Dendritic cell treated with granulocyte-macrophage colony-stimulating factor and Interleukin-4, amounts not matched to agents 40 ng/mL and 50 ng/mL, for 4 days (primary cell): ENCODE measurements at regions of chr3 and their contacts with region 1.

Region 1: DNA sequence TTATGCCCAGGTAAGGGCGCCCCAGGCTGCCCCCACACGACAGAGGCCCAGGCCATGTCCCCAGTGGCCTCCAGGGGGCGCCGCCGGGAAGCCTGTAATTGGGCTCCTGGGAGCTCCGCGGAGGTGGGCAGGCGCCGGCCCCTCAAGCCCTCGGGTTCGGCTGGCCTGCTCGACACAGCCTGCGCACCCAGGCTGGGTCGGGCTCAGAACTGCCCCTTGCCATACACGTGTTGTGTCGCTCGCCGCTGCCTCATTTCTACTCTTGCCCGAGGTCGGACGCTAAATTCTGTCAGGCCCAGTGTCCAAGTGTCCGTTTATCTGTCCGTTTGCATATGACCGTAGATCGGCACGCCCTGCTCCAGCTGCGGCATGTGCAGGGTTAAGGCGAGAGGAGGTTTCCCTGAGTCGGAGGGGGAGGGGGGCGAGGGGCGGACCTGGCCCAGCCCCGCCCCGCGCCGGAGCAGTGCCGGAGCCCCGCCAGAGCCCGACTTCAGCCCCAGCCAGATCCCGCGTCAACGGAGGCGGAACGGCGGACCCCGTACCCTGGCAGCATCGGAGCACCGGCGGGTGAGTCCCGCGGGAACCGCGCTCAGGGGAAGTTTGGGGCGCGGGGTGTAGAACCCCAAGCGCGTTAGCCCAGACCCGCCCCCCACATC is at the start of gene KLHDC8B:
- H3K4me3 Mint-ChIP-seq: peak within 1 kb of the TSS; percentile 83
- H3K27ac Mint-ChIP-seq: peak within 1 kb of the TSS; percentile 80
- H3K4me1 Mint-ChIP-seq: peaks cover 29% of the 10 kb centered on the region
- H3K27me3 Mint-ChIP-seq: peaks cover 9% of the 10 kb centered on the region

Region 2: DNA sequence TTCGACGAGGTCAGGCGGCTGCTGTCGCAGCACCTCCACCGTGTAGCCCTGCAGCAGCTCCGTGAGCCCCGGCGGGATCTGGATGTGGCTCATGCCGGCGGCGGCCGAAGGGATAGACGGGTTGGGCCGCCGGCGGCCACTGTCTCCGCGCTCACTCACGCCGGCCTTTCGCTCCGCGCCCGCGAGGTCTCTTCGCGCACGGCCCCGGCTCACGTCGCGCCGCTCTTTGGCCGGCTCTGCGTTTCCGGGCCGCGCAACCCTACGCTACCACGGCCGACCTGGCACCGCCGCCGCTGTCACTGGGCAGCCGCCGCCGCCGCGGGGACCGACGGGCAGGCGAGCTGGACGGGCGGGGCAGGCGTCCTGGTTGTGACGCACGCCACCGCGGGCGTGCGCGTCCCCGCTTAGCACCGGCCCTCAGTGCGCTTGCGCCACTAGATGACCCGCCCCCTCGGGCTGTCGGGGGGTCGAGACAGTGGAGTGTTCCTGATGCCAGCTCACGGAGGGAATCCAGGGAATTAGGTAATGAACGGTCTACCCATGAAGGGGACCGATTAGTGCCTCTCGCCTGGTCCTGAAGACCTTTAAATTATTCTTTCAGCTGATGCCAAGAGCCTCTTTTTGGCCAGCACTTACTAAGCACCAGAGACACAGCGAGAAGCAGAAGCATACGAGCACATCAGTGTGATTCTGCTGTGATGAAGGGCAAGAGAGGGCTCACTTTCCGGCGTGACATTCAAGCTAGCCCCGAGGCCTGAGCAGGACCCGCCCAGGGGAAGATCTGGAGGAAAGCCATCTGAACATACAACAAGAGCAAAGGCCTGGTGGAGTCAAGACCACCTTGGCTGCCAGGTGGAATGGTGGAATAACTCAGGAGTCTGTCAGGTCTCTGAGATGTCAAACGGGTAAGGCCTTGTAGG is 323.5 kb before region 1 on chr3 and contains the start of gene PRKAR2A:
- intact Hi-C with region 1: no loop called
- H3K4me3 Mint-ChIP-seq: peak within 1 kb of the TSS; percentile 83
- H3K27ac Mint-ChIP-seq: peak within 1 kb of the TSS; percentile 96
- H3K4me1 Mint-ChIP-seq: peaks cover 34% of the 10 kb centered on the region
- H3K27me3 Mint-ChIP-seq: no peaks in the 10 kb centered on the region

Region 3: DNA sequence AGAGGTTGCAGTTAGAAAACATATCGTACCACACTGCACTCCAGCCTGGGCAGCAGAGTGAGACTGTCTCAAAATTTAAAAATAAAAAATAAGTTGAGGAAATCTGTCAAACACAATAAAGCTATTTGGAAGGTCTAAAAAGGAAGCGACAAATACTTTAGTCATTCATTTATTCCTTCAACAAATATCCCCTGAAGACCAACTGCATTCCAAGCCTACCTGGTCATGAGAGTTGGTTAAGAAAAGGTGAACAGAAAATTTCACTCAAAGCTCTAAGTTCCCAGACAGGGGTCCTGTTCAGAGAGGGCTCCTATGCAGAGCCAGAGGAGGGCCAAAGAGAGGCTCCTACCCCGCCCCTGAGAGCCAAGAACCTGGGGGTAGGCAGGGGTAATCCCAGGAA is 308.1 kb before region 1 on chr3:
- intact Hi-C with region 1: no loop called
- H3K4me3 Mint-ChIP-seq: no peak overlapping the region
- H3K27ac Mint-ChIP-seq: no peak overlapping the region
- H3K4me1 Mint-ChIP-seq: peaks cover 13% of the 10 kb centered on the region
- H3K27me3 Mint-ChIP-seq: no peaks in the 10 kb centered on the region

Region 4: DNA sequence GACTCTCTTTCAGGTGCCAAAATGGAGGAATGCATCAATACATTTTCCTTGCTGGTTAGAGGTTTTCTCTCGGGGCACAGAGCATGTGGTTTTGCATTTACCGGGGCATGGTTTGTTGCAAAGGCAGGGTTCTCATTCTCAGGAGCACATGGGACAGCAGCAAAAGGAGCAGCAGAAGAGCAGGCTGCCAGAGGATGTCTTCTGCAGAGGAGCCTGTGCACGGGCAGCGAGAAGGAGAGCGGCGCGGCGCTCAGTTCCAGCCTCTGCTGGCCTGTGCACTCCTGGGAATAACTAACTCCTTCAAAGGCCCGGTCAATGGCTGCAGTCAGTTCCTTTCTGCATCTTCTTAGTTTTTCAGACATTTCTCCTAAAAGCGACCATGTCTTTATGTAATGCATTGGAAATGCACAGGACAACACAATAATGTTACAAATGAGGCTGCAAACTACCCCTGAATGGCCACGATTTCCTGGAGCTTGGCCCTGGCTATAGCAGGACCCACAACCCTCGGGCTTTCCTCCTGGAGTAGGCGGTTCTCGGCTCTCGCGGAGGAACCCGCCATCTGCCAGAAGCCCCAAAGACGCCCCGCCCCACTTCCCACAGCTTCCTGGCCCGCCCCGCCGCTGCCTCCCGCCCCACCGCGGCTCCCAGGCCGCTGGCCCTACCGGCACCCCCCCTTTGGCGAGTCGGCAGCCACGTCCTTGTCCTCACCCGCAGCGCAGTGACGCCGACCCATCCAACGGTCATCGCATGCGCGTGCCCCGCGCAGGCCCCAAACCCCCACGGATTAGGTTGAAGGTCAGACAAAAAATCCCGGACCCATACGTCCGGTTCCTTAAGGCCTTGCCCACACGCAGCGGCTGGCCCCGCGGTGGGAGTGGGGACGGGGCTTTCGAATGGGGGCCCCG is 105.5 kb after region 1 on chr3 and contains the start of gene C3orf62:
- intact Hi-C with region 1: loop called (anchors 1 kb)
- H3K4me3 Mint-ChIP-seq: peak within 1 kb of the TSS; percentile 77
- H3K27ac Mint-ChIP-seq: peak within 1 kb of the TSS; percentile 88
- H3K4me1 Mint-ChIP-seq: peaks cover 26% of the 10 kb centered on the region
- H3K27me3 Mint-ChIP-seq: no peaks in the 10 kb centered on the region

Region 5: DNA sequence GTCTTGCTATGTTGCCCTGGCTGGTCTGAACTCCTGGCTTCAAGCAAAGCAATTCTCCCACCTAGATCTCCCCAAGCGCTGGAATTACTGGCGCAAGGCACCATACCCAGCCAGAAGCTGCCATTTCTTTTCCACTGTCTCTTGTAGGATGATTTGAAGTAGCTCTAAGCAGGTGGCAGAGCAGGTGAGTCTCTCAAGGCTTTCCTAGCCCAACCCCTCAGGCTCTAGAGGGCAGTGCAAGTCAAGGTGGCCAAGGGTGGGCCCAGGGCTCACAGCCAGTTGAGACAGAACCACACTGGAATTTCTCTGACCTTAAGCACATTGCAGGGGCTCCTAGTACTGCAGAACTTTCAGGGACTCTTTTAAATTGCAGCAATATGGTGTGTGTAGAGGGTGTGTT is 283.2 kb after region 1 on chr3:
- intact Hi-C with region 1: loop called (anchors 2 kb)
- H3K4me3 Mint-ChIP-seq: no peak overlapping the region
- H3K27ac Mint-ChIP-seq: no peak overlapping the region
- H3K4me1 Mint-ChIP-seq: no peaks in the 10 kb centered on the region
- H3K27me3 Mint-ChIP-seq: peaks cover 6% of the 10 kb centered on the region